Sigmoid colon (tissue), 7 donors: ENCODE measurements at regions of chr7 and their contacts with region 1.

Region 1: DNA sequence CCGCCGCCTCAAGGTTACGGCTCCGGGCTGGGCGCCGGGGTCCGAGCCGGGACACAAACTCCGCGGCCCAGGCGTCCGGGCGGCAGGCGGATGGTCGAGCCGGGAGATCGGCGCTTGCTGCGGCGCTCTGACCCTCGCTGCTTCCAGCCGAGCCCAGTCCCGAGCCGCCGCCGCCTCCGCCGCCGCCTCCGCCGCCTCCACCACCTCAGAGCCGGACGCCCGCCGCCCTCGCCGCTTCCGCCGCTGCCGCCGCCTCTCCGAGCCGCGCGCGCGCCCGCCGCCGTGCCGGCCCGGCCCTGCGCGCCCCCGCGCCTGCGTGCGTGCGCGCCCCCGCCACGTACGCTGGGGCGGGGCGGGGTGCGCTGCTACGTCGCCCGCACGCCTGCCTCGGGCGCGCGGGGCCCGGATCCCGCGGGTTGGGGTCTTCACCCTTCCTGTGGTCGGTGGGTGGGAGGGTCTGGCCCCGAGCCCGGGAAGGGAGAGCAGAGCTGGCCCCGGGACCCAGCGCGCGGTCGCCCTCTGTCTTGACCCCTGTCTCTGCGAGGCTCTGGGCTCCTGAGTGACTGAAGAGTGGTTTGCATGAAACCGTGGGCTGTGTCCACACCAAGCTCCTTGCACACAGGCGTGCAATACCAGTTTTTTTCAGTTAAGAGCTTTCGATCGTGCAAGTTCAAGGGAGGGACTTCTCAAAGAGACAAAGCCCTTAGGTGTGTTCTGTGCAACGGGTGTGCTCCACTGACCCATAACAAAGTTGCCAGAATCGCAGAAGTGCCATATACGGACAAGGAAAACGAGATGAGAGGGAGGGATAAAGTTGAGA is at the start of gene SMURF1:
- DNase-seq: peak; percentile 80
- H3K4me3 ChIP-seq: peak within 1 kb of the TSS; percentile 89 to 98 (median 94)
- H3K27ac ChIP-seq: peak within 1 kb of the TSS; percentile 94 to 100 (median 99)
- H3K4me1 ChIP-seq: peaks cover 0 to 37% (median 24%) of the 10 kb centered on the region in 4 donors
- H3K27me3 ChIP-seq: no peaks in the 10 kb centered on the region
- CTCF ChIP-seq: no peak
- EP300 ChIP-seq: no peak
- POLR2A ChIP-seq: peak in 1 of 2 donors; percentile 40
- total RNA-seq, gene SMURF1: 10.7 to 18.0 (median 15.8) TPM

Region 2: DNA sequence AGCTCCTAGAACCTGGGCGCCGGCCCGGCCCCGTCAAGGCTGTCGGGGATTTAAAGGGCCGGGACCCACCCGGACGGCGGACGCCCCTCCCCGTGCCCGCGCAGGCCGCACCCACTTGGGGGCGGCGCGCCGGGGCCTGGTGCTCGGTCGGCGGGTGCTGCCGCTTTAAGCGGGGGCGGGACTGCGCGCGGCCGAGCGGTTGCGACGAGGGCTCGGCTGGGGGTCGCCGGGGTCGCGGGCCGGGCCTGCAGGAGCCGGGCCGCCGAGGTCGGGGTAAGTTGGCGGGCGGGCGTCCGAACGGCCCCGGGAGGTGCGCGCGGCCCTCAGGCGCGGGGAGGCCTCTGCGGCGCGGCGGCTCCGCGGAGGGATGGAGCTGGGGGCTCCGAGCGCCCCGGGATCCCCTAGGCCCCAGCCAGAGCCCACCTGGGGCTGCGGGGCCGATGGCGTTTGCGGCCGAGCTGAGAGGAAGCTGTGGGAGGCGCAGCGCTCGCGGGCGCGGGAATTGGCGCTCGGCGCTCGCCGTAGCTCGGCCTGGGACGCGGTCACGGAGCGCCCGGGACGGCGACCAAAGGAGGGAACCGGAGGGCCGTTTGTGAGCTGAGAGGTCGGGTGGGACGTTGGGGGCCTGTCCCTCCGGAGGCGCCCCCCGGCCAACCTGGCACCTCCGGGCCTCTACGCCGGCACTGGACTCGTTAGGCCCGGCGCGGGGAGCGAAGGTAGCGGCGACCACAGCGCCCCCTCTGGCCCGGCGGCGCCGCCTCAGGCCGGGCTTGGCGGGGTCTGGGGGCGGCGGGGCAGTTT is 265.5 kb before region 1 on chr7 and contains the start of gene TRRAP:
- intact Hi-C with region 1: loop called (anchors 5 kb)
- DNase-seq: peak; percentile 80
- H3K4me3 ChIP-seq: peak within 1 kb of the TSS; percentile 77 to 94 (median 83)
- H3K27ac ChIP-seq: peak within 1 kb of the TSS; percentile 91 to 97 (median 93)
- H3K4me1 ChIP-seq: peaks cover 0 to 19% (median 14%) of the 10 kb centered on the region in 4 donors
- H3K27me3 ChIP-seq: peaks cover 0 to 8% (median 3%) of the 10 kb centered on the region in 3 donors
- CTCF ChIP-seq: peak; percentile 80 to 99 (median 90)
- EP300 ChIP-seq: no peak
- POLR2A ChIP-seq: no peak
- total RNA-seq, gene TRRAP: 18.9 to 35.5 (median 24.0) TPM

Region 3: DNA sequence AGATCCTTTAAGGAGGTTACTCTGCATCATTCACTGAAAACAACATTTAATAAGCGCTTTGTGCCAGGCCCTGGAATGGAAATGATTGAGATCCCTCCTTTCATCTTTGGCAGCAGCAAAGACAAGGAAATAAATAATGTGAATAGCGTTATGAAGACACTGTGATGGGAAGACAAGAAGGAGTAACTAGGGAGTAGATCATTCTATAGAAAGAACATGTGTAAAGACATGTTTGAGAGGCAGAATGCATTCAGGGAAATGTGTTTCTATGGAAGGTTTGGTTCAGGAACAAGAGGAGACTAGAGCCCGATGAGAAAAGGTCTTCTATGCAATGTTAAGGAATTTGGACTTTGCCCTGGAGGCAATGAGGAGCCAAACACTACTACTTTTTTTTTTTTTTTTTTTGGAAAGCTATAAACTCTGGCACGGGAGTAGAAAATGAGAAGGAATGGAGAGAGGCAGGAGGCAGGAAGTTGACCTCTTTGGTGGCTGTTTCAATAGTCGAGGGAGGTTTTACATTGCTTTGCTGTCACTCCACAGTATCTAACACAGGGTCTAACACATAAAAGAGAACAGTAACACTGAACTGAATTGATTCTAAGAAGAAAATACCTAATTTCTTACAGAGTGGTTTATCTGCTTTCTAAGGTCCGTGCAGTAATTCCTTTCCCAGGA is 45.1 kb before region 1 on chr7:
- intact Hi-C with region 1: loop called (anchors 5 kb)
- DNase-seq: no peak
- H3K4me3 ChIP-seq: no peak overlapping the region
- H3K27ac ChIP-seq: peak overlapping the region; percentile 35 to 50 (median 42)
- H3K4me1 ChIP-seq: peaks cover 0 to 50% (median 36%) of the 10 kb centered on the region in 4 donors
- H3K27me3 ChIP-seq: no peaks in the 10 kb centered on the region
- CTCF ChIP-seq: no peak
- EP300 ChIP-seq: no peak
- POLR2A ChIP-seq: no peak

Region 4: DNA sequence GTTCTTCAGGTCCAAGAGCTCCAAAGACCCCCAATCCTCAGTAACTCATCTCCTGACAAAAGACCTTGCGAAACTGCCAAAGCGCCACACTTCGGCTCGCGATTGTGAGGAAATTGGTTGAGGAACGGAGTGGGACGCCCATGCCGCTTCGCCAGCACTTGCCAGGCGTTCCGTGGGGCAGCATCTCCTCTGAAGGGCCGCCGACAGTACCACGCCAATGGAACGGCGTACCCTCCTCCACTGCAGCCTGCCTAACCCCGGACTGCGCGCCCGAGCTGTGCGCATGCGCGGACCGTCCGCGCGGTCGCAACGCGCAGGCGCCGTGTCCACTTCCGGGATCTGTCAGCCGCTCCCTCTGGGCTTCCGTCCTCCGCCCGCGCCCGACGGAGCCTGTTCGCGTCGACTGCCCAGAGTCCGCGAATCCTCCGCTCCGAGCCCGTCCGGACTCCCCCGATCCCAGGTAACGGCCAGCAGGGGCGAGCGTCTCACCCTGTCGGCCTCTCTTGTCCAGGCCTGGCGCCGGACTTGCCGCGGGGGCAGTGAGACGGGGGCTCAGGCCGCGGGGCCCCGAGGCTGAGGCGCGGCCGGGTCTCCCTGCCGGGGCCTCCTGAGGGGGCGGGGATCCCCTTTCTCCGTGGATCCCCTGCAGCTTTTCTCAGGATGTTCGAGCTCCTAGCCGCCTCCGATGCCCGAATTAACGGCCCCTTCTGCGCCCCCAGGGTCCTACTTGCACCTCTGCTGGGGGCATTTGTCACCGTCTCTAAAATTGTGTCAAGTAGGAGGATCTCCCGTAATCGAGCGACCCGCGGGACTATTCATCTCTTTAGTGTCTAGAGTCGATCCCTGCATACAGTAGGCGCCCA is 181.7 kb after region 1 on chr7 and contains the start of gene ARPC1A:
- intact Hi-C with region 1: loop called (anchors 5 kb)
- DNase-seq: peak; percentile 95
- H3K4me3 ChIP-seq: peak within 1 kb of the TSS; percentile 91 to 100 (median 96)
- H3K27ac ChIP-seq: peak within 1 kb of the TSS; percentile 88 to 91 (median 89)
- H3K4me1 ChIP-seq: peaks cover 0 to 53% (median 35%) of the 10 kb centered on the region in 4 donors
- H3K27me3 ChIP-seq: no peaks in the 10 kb centered on the region
- CTCF ChIP-seq: peak in 2 of 4 experiments; percentile 21 to 24
- EP300 ChIP-seq: peak in 1 of 4 donors; percentile 27
- POLR2A ChIP-seq: peak; percentile 45 to 76
- total RNA-seq, gene ARPC1A: 94.6 to 131 (median 111) TPM

Region 5: GRCh38 chr7:99504603-99505323 is 360.7 kb after region 1 on chr7 and contains the start of gene ZKSCAN5:
- intact Hi-C with region 1: loop called (anchors 10 kb)
- DNase-seq: peak; percentile 99
- H3K4me3 ChIP-seq: peak within 1 kb of the TSS; percentile 59 to 81 (median 65)
- H3K27ac ChIP-seq: peak within 1 kb of the TSS; percentile 84 to 95 (median 90)
- H3K4me1 ChIP-seq: peaks cover 0 to 45% (median 35%) of the 10 kb centered on the region in 4 donors
- H3K27me3 ChIP-seq: no peaks in the 10 kb centered on the region
- CTCF ChIP-seq: no peak
- EP300 ChIP-seq: peak in 1 of 4 donors; percentile 31
- POLR2A ChIP-seq: peak; percentile 63 to 66
- total RNA-seq, gene ZKSCAN5: 7.7 to 12.5 (median 8.4) TPM